B cell (primary cell): ENCODE measurements at regions of chr17 and their contacts with region 1.

Region 1: GRCh38 chr17:42428141-42428944 is 5.3 kb upstream of the CAVIN1 start:
- DNase-seq: peak; percentile 72
- ATAC-seq: peak; percentile 60
- H3K4me3 ChIP-seq: no peak overlapping the region
- H3K4me3 Mint-ChIP-seq: no peak overlapping the region
- H3K27ac ChIP-seq: no peak overlapping the region
- H3K27ac Mint-ChIP-seq: no peak overlapping the region
- H3K4me1 ChIP-seq: peaks cover 5 to 8% of the 10 kb centered on the region in 2 donors
- H3K4me1 Mint-ChIP-seq: peaks cover 5% of the 10 kb centered on the region
- H3K27me3 ChIP-seq: peaks cover 0 to 23% (median 7%) of the 10 kb centered on the region in 4 experiments
- H3K27me3 Mint-ChIP-seq: peaks cover 15% of the 10 kb centered on the region
- CTCF ChIP-seq: peak; percentile 83

Region 2: DNA sequence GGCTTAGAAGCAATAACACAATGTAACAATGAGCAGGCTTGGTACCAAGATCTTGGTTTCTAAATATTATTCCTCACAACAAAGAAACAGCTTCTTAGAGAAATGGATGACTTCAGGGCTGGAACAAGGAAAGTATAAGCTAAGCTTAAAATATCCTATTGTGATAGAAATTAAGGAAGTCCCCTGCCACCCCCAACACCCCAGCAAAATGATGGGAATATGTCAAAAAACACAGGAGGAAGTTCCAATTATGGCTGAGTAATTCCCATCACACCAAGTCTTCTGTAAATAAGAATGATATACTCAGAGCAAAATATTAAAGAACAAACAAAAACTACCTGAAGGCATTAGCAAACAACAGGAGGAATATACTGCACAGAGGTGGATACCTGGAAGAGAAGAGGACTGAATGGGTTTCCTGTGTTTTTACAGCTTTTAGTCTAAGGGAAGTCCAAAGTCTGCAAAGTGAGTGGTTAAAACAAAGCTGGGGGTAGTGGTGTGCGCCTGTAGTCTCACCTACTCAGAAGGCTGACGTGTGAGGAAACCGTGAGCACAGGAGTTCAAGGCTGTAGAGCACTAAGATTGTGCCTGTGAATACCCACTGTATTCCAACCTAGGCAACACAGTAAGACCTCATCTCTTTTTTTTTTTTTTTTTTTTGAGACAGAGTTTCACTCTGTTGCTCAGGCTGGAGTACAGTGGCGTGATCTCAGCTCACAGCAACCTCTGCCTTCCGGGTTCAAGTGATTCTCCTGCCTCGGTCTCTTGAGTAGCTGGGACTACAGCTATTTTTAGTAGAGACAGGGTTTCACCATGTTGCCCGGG is 13.2 kb after region 1 on chr17:
- CTCF ChIA-PET with region 1: interaction called, 10 read pairs
- POLR2A ChIA-PET with region 1: interaction called, 4 read pairs
- intact Hi-C with region 1: no loop called
- DNase-seq: no peak
- ATAC-seq: no peak
- H3K4me3 ChIP-seq: no peak overlapping the region
- H3K4me3 Mint-ChIP-seq: no peak overlapping the region
- H3K27ac ChIP-seq: no peak overlapping the region
- H3K27ac Mint-ChIP-seq: no peak overlapping the region
- H3K4me1 ChIP-seq: peaks cover 7 to 10% of the 10 kb centered on the region in 2 donors
- H3K4me1 Mint-ChIP-seq: peaks cover 20% of the 10 kb centered on the region
- H3K27me3 ChIP-seq: no peaks in the 10 kb centered on the region
- H3K27me3 Mint-ChIP-seq: no peaks in the 10 kb centered on the region
- CTCF ChIP-seq: no peak

Region 3: GRCh38 chr17:42459256-42459800 is 31.0 kb after region 1 on chr17:
- CTCF ChIA-PET with region 1: interaction called, 8 read pairs
- POLR2A ChIA-PET with region 1: no interaction called
- intact Hi-C with region 1: loop called (anchors 1 kb)
- DNase-seq: peak; percentile 44
- ATAC-seq: no peak
- H3K4me3 ChIP-seq: peak overlapping the region; percentile 67 to 97 (median 95)
- H3K4me3 Mint-ChIP-seq: peak overlapping the region; percentile 97
- H3K27ac ChIP-seq: peak overlapping the region; percentile 78 to 84
- H3K27ac Mint-ChIP-seq: peak overlapping the region; percentile 93
- H3K4me1 ChIP-seq: peaks cover 52 to 61% of the 10 kb centered on the region in 2 donors
- H3K4me1 Mint-ChIP-seq: peaks cover 59% of the 10 kb centered on the region
- H3K27me3 ChIP-seq: no peaks in the 10 kb centered on the region
- H3K27me3 Mint-ChIP-seq: no peaks in the 10 kb centered on the region
- CTCF ChIP-seq: peak; percentile 6

Region 4: DNA sequence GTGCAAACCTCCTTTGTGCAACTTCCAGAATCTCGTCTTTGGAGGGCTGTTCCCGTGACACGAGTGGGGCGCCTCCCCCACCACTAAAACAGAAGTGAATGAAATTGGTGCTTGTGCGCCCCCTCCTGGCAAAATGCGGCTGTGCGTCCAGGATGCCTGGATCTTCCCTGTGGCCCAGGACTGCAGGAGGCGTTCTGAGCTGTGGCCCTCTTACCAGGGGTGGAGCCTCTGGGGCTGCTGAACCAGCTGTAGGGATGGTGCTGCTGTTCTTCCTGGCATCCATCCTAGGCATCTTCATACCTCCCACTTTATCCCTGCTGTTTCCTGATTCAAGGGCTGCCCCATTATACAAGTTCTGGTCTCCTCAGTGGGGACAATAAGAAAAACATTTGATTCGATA is 89.2 kb after region 1 on chr17:
- CTCF ChIA-PET with region 1: interaction called, 70 read pairs
- POLR2A ChIA-PET with region 1: no interaction called
- intact Hi-C with region 1: loop called (anchors 1 kb)
- DNase-seq: peak; percentile 87
- ATAC-seq: peak; percentile 90
- H3K4me3 ChIP-seq: no peak overlapping the region
- H3K4me3 Mint-ChIP-seq: no peak overlapping the region
- H3K27ac ChIP-seq: no peak overlapping the region
- H3K27ac Mint-ChIP-seq: peak overlapping the region; percentile 53
- H3K4me1 ChIP-seq: peaks cover 0 to 7% of the 10 kb centered on the region in 2 donors
- H3K4me1 Mint-ChIP-seq: peaks cover 3% of the 10 kb centered on the region
- H3K27me3 ChIP-seq: no peaks in the 10 kb centered on the region
- H3K27me3 Mint-ChIP-seq: no peaks in the 10 kb centered on the region
- CTCF ChIP-seq: peak; percentile 91

Region 5: DNA sequence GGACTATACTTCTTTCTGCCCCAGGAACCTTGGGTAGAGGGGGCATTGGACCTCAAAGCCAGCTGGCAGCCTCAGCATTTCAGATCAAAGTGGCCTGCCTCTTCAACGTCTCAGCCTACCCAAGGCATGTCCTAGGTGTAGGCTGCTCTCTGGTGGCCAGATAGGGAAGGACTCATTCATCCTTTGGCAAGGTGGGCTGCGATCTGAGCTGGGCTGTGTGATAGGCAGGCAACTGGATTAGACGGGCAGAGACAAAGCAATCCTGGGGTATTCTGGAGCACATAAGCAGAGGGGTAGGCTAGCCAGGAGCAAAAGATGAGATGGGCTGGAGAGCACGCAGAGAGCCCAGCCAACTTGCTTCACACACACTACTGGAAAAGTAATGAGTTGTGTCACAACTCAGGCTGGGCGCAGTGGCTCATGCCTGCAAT is 98.9 kb after region 1 on chr17:
- CTCF ChIA-PET with region 1: interaction called, 12 read pairs
- POLR2A ChIA-PET with region 1: no interaction called
- intact Hi-C with region 1: no loop called
- DNase-seq: peak; percentile 79
- ATAC-seq: peak; percentile 68
- H3K4me3 ChIP-seq: no peak overlapping the region
- H3K4me3 Mint-ChIP-seq: no peak overlapping the region
- H3K27ac ChIP-seq: no peak overlapping the region
- H3K27ac Mint-ChIP-seq: peak overlapping the region; percentile 28
- H3K4me1 ChIP-seq: peaks cover 24 to 37% of the 10 kb centered on the region in 2 donors
- H3K4me1 Mint-ChIP-seq: peaks cover 26% of the 10 kb centered on the region
- H3K27me3 ChIP-seq: no peaks in the 10 kb centered on the region
- H3K27me3 Mint-ChIP-seq: no peaks in the 10 kb centered on the region
- CTCF ChIP-seq: peak; percentile 80